A673 (cell line): ENCODE measurements at regions of chr12 and their contacts with region 1.

Region 1: DNA sequence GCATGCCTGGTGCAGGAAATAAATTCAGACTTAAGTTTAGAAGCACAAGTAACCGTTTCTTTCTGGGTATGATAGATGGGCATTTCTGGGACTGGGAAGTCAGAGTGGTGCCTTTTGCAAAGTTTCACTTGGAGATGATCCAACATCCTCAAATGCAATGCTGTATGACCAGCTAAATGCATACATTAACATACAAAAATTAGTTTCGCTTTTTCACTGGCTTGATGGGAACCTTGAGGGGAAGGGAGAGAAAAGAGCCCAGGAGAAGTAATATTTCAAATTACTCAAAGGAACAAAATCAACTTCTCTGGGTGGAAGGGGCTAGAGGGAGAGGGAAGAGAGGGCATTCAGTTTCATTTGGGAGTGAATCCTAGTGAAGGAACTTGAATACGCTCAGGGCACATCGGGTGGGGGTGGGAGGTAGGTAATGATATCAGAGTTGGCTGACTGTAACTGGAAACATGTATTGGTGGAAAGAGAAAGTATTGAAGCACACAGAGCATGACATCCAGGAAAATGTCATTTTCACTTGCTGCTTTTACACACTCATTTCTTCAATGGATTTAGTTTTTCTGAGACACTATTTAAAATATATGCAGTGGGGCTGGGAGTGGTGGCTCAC is 175.5 kb downstream of the PTPRO start:
- DNase-seq: peak; percentile 21
- H3K4me3 ChIP-seq: no peak overlapping the region
- H3K27ac ChIP-seq: no peak overlapping the region
- H3K4me1 ChIP-seq: no peaks in the 10 kb centered on the region
- H3K27me3 ChIP-seq: no peaks in the 10 kb centered on the region
- CTCF ChIP-seq: no peak

Region 2: GRCh38 chr12:16020031-16020430 is 522.2 kb after region 1 on chr12:
- CTCF ChIA-PET with region 1: no interaction called
- POLR2A ChIA-PET with region 1: no interaction called
- intact Hi-C with region 1: no loop called
- DNase-seq: no peak
- H3K4me3 ChIP-seq: no peak overlapping the region
- H3K27ac ChIP-seq: no peak overlapping the region
- H3K4me1 ChIP-seq: no peaks in the 10 kb centered on the region
- H3K27me3 ChIP-seq: no peaks in the 10 kb centered on the region
- CTCF ChIP-seq: no peak

Region 3: GRCh38 chr12:16030729-16031128 is 532.9 kb after region 1 on chr12:
- CTCF ChIA-PET with region 1: no interaction called
- POLR2A ChIA-PET with region 1: no interaction called
- intact Hi-C with region 1: no loop called
- DNase-seq: no peak
- H3K4me3 ChIP-seq: no peak overlapping the region
- H3K27ac ChIP-seq: no peak overlapping the region
- H3K4me1 ChIP-seq: no peaks in the 10 kb centered on the region
- H3K27me3 ChIP-seq: no peaks in the 10 kb centered on the region
- CTCF ChIP-seq: no peak

Region 4: DNA sequence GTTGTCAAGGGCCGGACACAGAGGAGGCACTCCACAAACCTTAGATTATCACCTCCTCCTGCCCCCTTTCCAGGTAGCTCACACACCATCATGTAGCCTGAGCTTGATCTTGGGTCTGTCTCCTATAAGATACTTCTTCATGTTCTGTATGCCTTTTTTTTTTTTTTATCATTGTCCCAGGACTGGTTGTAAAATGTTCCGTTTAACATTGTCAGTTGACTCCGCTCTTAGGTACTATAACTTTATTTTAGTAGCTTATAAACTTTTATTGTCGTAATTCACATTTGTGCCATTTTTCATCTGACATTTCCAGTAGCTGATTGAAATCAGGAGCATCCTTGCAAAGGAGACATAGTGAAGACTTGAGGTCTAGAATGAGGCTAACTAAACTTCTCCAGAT is 699.8 kb after region 1 on chr12:
- CTCF ChIA-PET with region 1: no interaction called
- POLR2A ChIA-PET with region 1: interaction called, 10 read pairs
- intact Hi-C with region 1: no loop called
- DNase-seq: no peak
- H3K4me3 ChIP-seq: no peak overlapping the region
- H3K27ac ChIP-seq: no peak overlapping the region
- H3K4me1 ChIP-seq: no peaks in the 10 kb centered on the region
- H3K27me3 ChIP-seq: no peaks in the 10 kb centered on the region
- CTCF ChIP-seq: no peak